Adrenal gland (tissue), 19 donors: ENCODE measurements at regions of chr15 and their contacts with region 1.

Region 1: DNA sequence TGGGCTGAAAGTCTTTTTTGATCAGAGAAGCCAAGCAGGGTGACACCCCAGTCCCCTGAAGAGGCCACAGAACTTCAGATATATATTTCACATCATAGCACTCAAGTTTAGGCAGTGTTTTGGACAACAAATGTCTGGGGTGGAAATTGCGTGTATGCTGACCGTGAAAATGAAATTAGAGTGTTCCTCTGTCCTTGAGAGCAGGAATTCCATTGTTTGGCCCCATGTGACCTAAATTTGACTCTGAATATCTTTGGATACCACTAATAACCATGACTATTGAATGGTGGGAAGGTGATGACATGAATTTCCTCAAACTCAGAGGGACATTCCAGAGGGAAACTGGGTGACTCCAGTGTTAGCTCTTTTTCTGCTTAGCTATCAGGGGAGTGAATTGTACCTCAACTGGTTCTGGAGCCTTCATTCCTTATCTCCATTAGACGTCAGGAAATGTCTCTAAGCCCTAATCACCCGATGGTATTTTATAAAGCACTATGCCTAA is 263.5 kb upstream of the RASGRP1 start:
- DNase-seq: no peak
- H3K4me3 ChIP-seq: no peak overlapping the region
- H3K27ac ChIP-seq: no peak overlapping the region
- H3K4me1 ChIP-seq: no peaks in the 10 kb centered on the region
- H3K27me3 ChIP-seq: no peaks in the 10 kb centered on the region
- CTCF ChIP-seq: no peak
- POLR2A ChIP-seq: no peak

Region 2: DNA sequence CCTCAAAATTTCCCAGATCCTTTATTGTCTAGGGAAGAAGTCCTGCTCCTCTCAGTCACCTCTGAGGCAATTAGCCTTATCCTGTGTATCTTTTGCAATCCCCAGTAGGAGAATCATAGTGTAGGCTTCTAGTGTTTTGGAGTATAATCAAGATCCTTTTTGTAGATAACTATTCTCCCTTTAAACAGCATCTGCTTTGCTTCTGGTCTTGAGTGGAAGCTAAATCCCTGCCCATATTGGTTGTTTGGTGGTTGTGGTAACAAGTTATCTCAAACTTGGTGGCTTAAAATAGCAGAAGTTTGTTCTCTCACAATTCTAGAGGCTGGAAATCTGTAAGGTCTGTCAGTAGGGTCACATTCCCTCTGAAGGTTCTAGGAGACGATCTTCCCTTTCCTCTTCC is 45.9 kb before region 1 on chr15:
- intact Hi-C with region 1: loop called in 1 of 2 experiments (anchors 5 kb)
- DNase-seq: no peak
- H3K4me3 ChIP-seq: no peak overlapping the region
- H3K27ac ChIP-seq: no peak overlapping the region
- H3K4me1 ChIP-seq: no peaks in the 10 kb centered on the region
- H3K27me3 ChIP-seq: no peaks in the 10 kb centered on the region
- CTCF ChIP-seq: no peak
- POLR2A ChIP-seq: no peak

Region 3: GRCh38 chr15:38991126-38991525 is 163.0 kb after region 1 on chr15:
- intact Hi-C with region 1: loop called in 1 of 2 experiments (anchors 5 kb)
- DNase-seq: no peak
- H3K4me3 ChIP-seq: no peak overlapping the region
- H3K27ac ChIP-seq: no peak overlapping the region
- H3K4me1 ChIP-seq: no peaks in the 10 kb centered on the region
- H3K27me3 ChIP-seq: no peaks in the 10 kb centered on the region
- CTCF ChIP-seq: peak; percentile 41 to 54 (median 50)
- POLR2A ChIP-seq: no peak